A549 (cell line): ENCODE measurements at regions of chr7 and their contacts with region 1.

Region 1: DNA sequence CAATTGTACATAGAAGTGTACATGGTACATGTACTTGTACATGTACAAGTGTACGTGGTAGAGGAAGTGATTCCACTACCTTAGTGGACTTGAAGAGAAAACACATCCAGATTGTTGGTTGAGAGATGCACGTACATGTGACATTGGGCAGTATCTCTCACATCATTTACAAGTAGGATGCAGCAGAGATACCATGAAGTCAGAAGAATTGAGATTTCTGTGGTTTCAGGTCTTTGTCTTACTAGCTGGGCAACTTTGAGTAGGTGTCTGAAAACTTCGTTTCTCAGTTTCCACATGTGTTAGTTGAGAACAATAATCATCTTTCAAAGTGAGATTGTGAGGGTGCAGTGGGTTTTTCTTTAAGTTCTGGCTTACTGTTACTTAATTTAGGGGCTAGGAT is 21.5 kb downstream of the CLDN12 start:
- DNase-seq: no peak
- ATAC-seq: no peak
- H3K4me3 ChIP-seq: no peak overlapping the region
- H3K27ac ChIP-seq: no peak overlapping the region; a peak in 1 of 6 replicates
- H3K4me1 ChIP-seq: peaks cover 6% of the 10 kb centered on the region; the same call in 2 of the 3 replicates
- CTCF ChIP-seq: no peak
- EP300 ChIP-seq: no peak
- POLR2A ChIP-seq: no peak
- RAD21 ChIP-seq: no peak

Region 2: DNA sequence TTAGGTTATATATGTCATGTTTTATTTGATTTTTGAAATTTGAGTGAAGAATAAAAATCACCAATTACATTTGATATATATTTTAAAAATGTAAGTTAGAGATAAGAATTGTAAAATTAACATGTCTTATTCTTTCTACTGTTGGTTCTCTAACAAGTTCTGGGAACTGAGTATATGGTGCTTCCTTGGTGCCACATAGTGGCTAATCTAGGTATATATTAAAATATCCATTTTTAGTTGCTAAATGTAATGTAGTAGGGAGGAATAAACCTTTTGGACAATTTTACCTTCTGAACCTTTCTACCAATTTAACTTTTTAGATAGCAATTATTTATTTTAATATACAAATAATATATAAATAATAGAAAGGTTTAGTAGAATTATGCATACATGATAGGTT is 162.3 kb before region 1 on chr7:
- CTCF ChIA-PET with region 1: interaction called, 11 read pairs
- POLR2A ChIA-PET with region 1: no interaction called
- DNase-seq: peak; percentile 37 to 42
- ATAC-seq: peak in 1 of 2 experiments; percentile 84; a peak in 4 of 6 replicates
- H3K4me3 ChIP-seq: no peak overlapping the region
- H3K27ac ChIP-seq: no peak overlapping the region
- H3K4me1 ChIP-seq: no peaks in the 10 kb centered on the region
- CTCF ChIP-seq: peak; percentile 76
- EP300 ChIP-seq: no peak
- POLR2A ChIP-seq: no peak
- RAD21 ChIP-seq: peak; percentile 77 to 84

Region 3: GRCh38 chr7:90334193-90334843 is 90.4 kb before region 1 on chr7:
- CTCF ChIA-PET with region 1: no interaction called
- POLR2A ChIA-PET with region 1: no interaction called
- DNase-seq: no peak
- ATAC-seq: no peak
- H3K4me3 ChIP-seq: no peak overlapping the region
- H3K27ac ChIP-seq: no peak overlapping the region
- H3K4me1 ChIP-seq: no peaks in the 10 kb centered on the region
- CTCF ChIP-seq: no peak
- EP300 ChIP-seq: no peak
- POLR2A ChIP-seq: no peak
- RAD21 ChIP-seq: no peak

Region 4: DNA sequence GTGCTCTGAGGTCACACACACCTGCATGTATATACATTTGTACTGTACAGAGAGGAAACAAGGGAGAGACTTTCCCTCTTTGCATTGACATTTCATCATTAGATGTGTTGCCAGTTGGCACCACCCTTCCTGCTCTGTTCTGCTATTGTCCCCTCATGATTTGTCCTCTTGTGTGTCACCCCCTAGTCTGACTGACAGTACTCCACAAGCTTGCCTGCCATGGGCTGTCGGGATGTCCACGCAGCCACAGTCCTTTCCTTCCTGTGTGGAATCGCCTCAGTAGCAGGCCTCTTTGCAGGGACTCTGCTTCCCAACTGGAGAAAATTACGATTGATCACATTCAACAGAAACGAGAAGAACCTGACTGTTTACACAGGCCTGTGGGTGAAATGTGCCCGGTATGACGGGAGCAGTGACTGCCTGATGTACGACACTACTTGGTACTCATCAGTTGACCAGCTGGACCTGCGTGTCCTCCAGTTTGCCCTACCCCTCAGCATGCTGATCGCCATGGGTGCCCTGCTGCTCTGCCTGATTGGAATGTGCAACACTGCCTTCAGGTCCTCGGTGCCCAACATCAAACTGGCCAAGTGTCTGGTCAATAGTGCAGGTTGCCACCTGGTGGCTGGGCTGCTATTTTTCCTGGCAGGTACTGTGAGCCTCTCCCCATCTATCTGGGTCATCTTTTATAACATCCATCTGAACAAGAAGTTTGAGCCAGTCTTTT is 12.1 kb before region 1 on chr7:
- CTCF ChIA-PET with region 1: interaction called, 31 read pairs
- POLR2A ChIA-PET with region 1: no interaction called
- DNase-seq: peak in 1 of 2 experiments; percentile 50
- ATAC-seq: peak; percentile 84 to 93; a peak in 5 of 6 replicates
- H3K4me3 ChIP-seq: no peak overlapping the region
- H3K27ac ChIP-seq: no peak overlapping the region
- H3K4me1 ChIP-seq: 0 out of 3 replicates have a peak, but pooled peaks cover 5% of the 10 kb centered on the region
- CTCF ChIP-seq: peak; percentile 43; the same call in 2 of the 3 replicates
- EP300 ChIP-seq: no peak
- POLR2A ChIP-seq: no peak
- RAD21 ChIP-seq: peak; percentile 27 to 43; a peak in 2 of 5 replicates